IMR-90 (cell line): ENCODE measurements at regions of chr3 and their contacts with region 1.

Region 1: GRCh38 chr3:108124337-108125152 is 33.7 kb upstream of the CD47 start:
- DNase-seq: no peak
- ATAC-seq: no peak
- H3K4me3 ChIP-seq: no peak overlapping the region
- H3K27ac ChIP-seq: no peak overlapping the region
- H3K4me1 ChIP-seq: peaks cover 4% of the 10 kb centered on the region; the same call in 1 of the 2 replicates
- H3K27me3 ChIP-seq: no peaks in the 10 kb centered on the region
- CTCF ChIP-seq: no peak
- POLR2A ChIP-seq: no peak
- RAD21 ChIP-seq: no peak

Region 2: GRCh38 chr3:107594870-107595269 is 529.7 kb before region 1 on chr3:
- CTCF ChIA-PET with region 1: no interaction called
- POLR2A ChIA-PET with region 1: no interaction called
- dilution Hi-C with region 1: no loop called
- in situ Hi-C with region 1: no loop called
- intact Hi-C with region 1: loop called (anchors 5 kb)
- DNase-seq: peak; percentile 7
- ATAC-seq: peak; percentile 59; the same call in 1 of the 2 replicates
- H3K4me3 ChIP-seq: no peak overlapping the region
- H3K27ac ChIP-seq: no peak overlapping the region
- H3K4me1 ChIP-seq: peaks cover 4% of the 10 kb centered on the region; the same call in 1 of the 2 replicates
- H3K27me3 ChIP-seq: no peaks in the 10 kb centered on the region
- CTCF ChIP-seq: no peak
- POLR2A ChIP-seq: no peak
- RAD21 ChIP-seq: no peak

Region 3: GRCh38 chr3:108970561-108970960 is 846.0 kb after region 1 on chr3:
- CTCF ChIA-PET with region 1: no interaction called
- POLR2A ChIA-PET with region 1: no interaction called
- dilution Hi-C with region 1: no loop called
- in situ Hi-C with region 1: no loop called
- intact Hi-C with region 1: no loop called
- DNase-seq: no peak
- ATAC-seq: no peak
- H3K4me3 ChIP-seq: no peak overlapping the region
- H3K27ac ChIP-seq: no peak overlapping the region
- H3K4me1 ChIP-seq: no peaks in the 10 kb centered on the region
- H3K27me3 ChIP-seq: no peaks in the 10 kb centered on the region
- CTCF ChIP-seq: no peak
- POLR2A ChIP-seq: no peak
- RAD21 ChIP-seq: no peak